CD4-positive, alpha-beta memory T cell (primary cell): ENCODE measurements at regions of chr13 and their contacts with region 1.

Region 1: GRCh38 chr13:44988973-44989817 is at the starts of genes GPALPP1 and NUFIP1:
- DNase-seq: peak; percentile 89 to 96 (median 89)
- H3K4me3 ChIP-seq: peak within 1 kb of the TSS; percentile 95 to 99
- H3K4me3 Mint-ChIP-seq: peak within 1 kb of the TSS; percentile 98 to 100 (median 99)
- H3K27ac ChIP-seq: peak within 1 kb of the TSS; percentile 87
- H3K27ac Mint-ChIP-seq: peak within 1 kb of the TSS; percentile 98 to 99 (median 99)
- H3K4me1 ChIP-seq: peaks cover 37% of the 10 kb centered on the region
- H3K4me1 Mint-ChIP-seq: peaks cover 47 to 72% (median 58%) of the 10 kb centered on the region in 4 donors
- H3K27me3 ChIP-seq: no peaks in the 10 kb centered on the region
- H3K27me3 Mint-ChIP-seq: no peaks in the 10 kb centered on the region
- total RNA-seq, gene GPALPP1: 33.0 to 35.1 TPM
- total RNA-seq, gene NUFIP1: 4.4 to 4.8 TPM

Region 2: GRCh38 chr13:45119991-45120864 is 131.0 kb after region 1 on chr13 and contains the start of gene GTF2F2:
- CTCF ChIA-PET with region 1: no interaction called
- POLR2A ChIA-PET with region 1: no interaction called
- intact Hi-C with region 1: loop called (anchors 1 kb)
- DNase-seq: peak; percentile 86 to 89 (median 87)
- H3K4me3 ChIP-seq: peak within 1 kb of the TSS; percentile 83 to 88
- H3K4me3 Mint-ChIP-seq: no peak within 1 kb of the TSS
- H3K27ac ChIP-seq: peak within 1 kb of the TSS; percentile 90
- H3K27ac Mint-ChIP-seq: no peak within 1 kb of the TSS
- H3K4me1 ChIP-seq: peaks cover 28% of the 10 kb centered on the region
- H3K4me1 Mint-ChIP-seq: peaks cover 6 to 21% (median 11%) of the 10 kb centered on the region in 4 donors
- H3K27me3 ChIP-seq: no peaks in the 10 kb centered on the region
- H3K27me3 Mint-ChIP-seq: no peaks in the 10 kb centered on the region
- total RNA-seq, gene GTF2F2: 12.3 to 14.7 TPM

Region 3: GRCh38 chr13:45162821-45163220 is 173.6 kb after region 1 on chr13:
- CTCF ChIA-PET with region 1: no interaction called
- POLR2A ChIA-PET with region 1: no interaction called
- intact Hi-C with region 1: no loop called
- DNase-seq: no peak
- H3K4me3 ChIP-seq: no peak overlapping the region
- H3K4me3 Mint-ChIP-seq: no peak overlapping the region
- H3K27ac ChIP-seq: no peak overlapping the region
- H3K27ac Mint-ChIP-seq: no peak overlapping the region
- H3K4me1 ChIP-seq: no peaks in the 10 kb centered on the region
- H3K4me1 Mint-ChIP-seq: no peaks in the 10 kb centered on the region
- H3K27me3 ChIP-seq: no peaks in the 10 kb centered on the region
- H3K27me3 Mint-ChIP-seq: no peaks in the 10 kb centered on the region

Region 4: DNA sequence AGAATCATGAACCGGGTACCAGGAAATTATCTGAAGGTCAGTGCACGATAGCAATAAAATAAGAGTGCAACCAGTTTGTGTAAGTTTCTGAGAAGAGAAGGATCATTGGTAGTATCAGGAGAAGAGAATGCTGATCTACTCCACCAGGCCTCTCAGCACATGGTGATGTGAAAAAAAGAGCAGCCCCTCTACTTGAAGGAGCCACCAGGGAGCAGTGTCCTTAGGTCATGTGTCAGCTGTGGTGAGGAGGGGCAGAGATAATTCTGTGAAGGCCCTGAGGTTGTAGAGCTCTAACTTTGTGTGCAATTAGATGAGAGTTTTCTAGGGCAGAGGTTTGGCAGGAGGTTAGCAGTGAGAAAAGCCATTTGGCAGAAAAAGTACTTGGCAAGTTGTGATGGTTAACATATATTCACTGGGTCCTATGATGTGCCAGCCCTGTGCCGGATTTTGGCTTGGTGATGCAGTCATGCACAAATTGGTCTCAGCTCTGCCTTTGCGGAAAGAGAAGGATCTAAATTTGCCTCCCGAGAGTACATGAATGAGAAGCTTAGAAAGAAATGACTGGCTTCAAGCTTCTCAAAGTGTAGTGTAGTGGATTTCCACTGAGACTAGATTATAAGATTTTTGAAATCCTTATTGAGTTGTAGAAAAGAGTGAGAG is 1082.5 kb after region 1 on chr13:
- CTCF ChIA-PET with region 1: no interaction called
- POLR2A ChIA-PET with region 1: no interaction called
- intact Hi-C with region 1: no loop called
- DNase-seq: no peak
- H3K4me3 ChIP-seq: no peak overlapping the region
- H3K4me3 Mint-ChIP-seq: no peak overlapping the region
- H3K27ac ChIP-seq: no peak overlapping the region
- H3K27ac Mint-ChIP-seq: no peak overlapping the region
- H3K4me1 ChIP-seq: no peaks in the 10 kb centered on the region
- H3K4me1 Mint-ChIP-seq: no peaks in the 10 kb centered on the region
- H3K27me3 ChIP-seq: no peaks in the 10 kb centered on the region
- H3K27me3 Mint-ChIP-seq: peaks cover 6 to 8% of the 10 kb centered on the region in 2 donors